ENCODE measurements at regions of chr17 and their contacts with region 1.

Region 1: GRCh38 chr17:75749545-75750389 is 15.2 kb downstream of the GALK1 start:
- DNase-seq: no peak
- ATAC-seq: peak; percentile 82
- H3K4me3 ChIP-seq: no peak overlapping the region
- H3K27ac ChIP-seq: no peak overlapping the region
- H3K4me1 ChIP-seq: peaks cover 10% of the 10 kb centered on the region
- H3K27me3 ChIP-seq: no peaks in the 10 kb centered on the region
- CTCF ChIP-seq: peak; percentile 85 to 94 (median 88)
- EP300 ChIP-seq: no peak
- POLR2A ChIP-seq: no peak
- RAD21 ChIP-seq: peak; percentile 77

Region 2: DNA sequence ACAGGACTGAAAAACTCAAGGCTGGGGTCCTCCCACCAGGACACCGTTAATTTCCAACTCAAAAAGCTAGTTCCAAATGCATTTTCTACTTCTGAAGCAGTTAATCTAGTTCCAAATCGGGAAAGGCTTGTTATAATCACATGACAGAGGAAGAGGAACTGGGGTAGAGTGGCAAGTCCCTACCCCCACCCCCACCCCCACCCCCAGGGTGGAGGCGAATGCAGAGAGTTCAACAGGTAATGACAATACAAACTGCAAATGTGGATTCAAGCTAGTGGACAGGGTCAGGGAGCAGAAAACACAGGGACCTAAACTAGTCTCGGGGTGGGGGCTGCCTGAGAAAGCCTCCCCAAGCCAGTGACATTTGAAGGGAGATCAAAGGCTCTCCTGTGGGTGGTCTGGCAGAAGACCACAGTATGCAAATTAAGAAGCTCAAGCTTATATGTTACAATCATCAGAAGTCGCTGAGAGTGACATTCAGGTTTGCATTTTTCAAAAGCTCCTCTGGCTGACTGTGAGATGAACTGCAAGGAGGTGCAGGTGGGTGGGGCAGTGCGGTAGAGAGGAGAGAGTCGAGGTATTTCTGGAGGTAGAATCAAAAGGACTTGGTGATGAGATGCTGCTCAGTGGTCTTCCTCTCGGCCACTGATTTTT is 404.1 kb before region 1 on chr17:
- CTCF ChIA-PET with region 1: no interaction called
- POLR2A ChIA-PET with region 1: no interaction called
- RAD21 ChIA-PET with region 1: no interaction called
- SMC1A ChIA-PET with region 1: no interaction called
- in situ Hi-C with region 1: no loop called
- intact Hi-C with region 1: no loop called
- DNase-seq: peak; percentile 91
- ATAC-seq: peak; percentile 79
- H3K4me3 ChIP-seq: peak overlapping the region; percentile 62
- H3K27ac ChIP-seq: peak overlapping the region; percentile 85
- H3K4me1 ChIP-seq: peaks cover 68% of the 10 kb centered on the region
- H3K27me3 ChIP-seq: no peaks in the 10 kb centered on the region
- CTCF ChIP-seq: no peak
- EP300 ChIP-seq: peak; percentile 34 to 65; a peak in 1 of 4 replicates
- POLR2A ChIP-seq: no peak
- RAD21 ChIP-seq: 0 out of 2 replicates have a peak, but pooled peaks have one; percentile 25

Region 3: DNA sequence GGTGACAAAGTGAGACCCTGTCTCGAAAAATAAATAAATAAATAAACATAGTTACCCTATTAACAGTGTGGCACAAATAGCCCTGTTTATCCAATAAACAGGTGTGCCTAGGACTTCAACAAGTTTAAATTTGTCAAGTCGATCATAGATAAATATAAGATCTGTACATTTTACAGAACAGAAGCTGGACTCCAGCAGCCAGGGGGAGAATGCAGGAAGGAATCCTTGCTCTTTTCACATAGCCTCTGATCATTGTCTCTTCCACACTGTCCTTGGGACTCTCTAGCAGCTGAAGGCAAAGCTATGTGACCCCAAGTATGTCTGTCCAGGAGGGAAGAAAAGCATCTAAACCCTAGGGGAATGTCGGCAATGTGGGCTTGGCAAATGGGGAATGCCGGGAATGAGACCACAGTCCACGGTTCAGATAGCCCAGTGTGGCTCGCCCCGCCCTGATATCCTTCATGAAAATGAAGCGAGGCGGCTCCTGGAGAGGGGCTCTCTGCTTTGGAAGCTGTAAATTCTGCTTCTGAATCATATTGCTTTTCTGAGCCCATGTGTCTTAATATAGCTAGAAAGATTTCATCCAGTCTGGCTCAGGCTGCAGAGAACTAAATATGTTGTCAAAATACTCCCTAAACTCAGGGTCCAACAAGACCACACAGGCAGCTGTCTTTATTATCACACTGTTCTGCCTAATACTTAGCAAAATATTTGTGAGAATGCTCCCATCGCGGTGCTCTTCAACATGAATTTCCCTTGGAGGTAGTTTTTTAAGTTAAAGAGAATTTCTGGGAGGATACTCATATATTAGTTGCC is 319.4 kb before region 1 on chr17:
- CTCF ChIA-PET with region 1: interaction called, 8 read pairs
- POLR2A ChIA-PET with region 1: interaction called, 3 read pairs
- RAD21 ChIA-PET with region 1: interaction called, 15 read pairs
- SMC1A ChIA-PET with region 1: no interaction called
- in situ Hi-C with region 1: loop called (anchors 5 kb)
- intact Hi-C with region 1: loop called (anchors 5 kb)
- DNase-seq: no peak
- ATAC-seq: no peak
- H3K4me3 ChIP-seq: no peak overlapping the region
- H3K27ac ChIP-seq: no peak overlapping the region
- H3K4me1 ChIP-seq: peaks cover 9% of the 10 kb centered on the region
- H3K27me3 ChIP-seq: no peaks in the 10 kb centered on the region; a peak in 1 of 4 replicates
- CTCF ChIP-seq: no peak
- EP300 ChIP-seq: no peak
- POLR2A ChIP-seq: no peak
- RAD21 ChIP-seq: no peak

Region 4: DNA sequence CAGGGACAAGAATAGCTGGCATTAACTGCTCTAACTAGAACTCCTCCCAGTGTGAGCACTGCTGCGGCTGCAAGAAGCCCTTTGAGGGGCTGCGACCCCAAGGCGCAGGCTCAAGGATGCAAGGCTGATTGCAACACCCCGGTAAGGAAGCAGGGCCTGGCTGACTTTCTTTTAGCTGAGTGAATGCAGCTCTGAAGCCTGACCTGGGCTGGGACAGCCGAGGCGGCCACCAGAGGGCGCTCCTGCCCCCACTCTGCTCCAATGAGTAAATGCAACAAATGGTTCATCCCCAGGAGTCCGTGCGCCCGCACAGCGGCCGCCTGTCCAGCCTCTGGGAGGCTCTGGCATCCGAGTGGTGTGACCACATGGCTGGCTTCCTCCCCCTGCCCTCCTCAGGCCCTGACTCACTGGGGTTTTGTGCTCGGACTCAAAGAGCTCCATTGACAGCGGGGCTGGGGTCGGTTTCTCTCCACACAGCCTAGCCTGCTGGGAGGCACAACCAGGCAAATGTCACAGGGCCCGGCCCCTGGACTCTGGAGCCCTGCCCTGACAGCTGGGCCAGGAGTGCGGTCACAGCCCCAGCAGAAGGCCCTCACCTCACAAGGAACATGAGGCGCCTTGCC is 116.8 kb before region 1 on chr17 and contains the start of gene SMIM5:
- CTCF ChIA-PET with region 1: interaction called, 336 read pairs
- POLR2A ChIA-PET with region 1: interaction called, 3 read pairs
- RAD21 ChIA-PET with region 1: interaction called, 148 read pairs
- SMC1A ChIA-PET with region 1: interaction called, 44 read pairs
- in situ Hi-C with region 1: loop called (anchors 10 kb)
- intact Hi-C with region 1: loop called (anchors 1 kb)
- DNase-seq: no peak
- ATAC-seq: peak; percentile 97
- H3K4me3 ChIP-seq: no peak within 1 kb of the TSS
- H3K27ac ChIP-seq: no peak within 1 kb of the TSS
- H3K4me1 ChIP-seq: peaks cover 8% of the 10 kb centered on the region
- H3K27me3 ChIP-seq: no peaks in the 10 kb centered on the region
- CTCF ChIP-seq: peak; percentile 87 to 95 (median 92)
- EP300 ChIP-seq: no peak
- POLR2A ChIP-seq: no peak
- RAD21 ChIP-seq: peak; percentile 69
- polyA plus RNA-seq, gene SMIM5: not detected

Region 5: DNA sequence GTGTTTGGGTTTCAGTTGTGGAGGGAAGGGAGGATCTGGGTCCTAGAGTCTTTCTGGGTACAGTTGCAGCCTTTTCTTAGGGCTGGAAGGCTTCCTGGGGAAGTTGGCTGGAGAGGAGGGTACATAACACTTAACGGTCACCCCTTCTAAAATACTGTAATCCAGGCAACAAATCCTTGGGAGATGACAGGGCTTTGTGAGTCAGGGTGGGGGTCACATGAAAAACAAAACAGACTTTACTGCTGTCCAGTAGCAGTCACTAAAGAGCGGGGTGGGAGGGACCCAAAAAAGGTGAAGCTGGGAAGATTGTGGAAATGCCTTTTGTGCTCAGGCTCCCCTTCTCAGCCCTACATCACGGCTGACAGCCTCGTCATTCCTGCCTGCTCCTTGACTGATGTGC is 76.3 kb before region 1 on chr17:
- CTCF ChIA-PET with region 1: interaction called, 197 read pairs
- POLR2A ChIA-PET with region 1: interaction called, 3 read pairs
- RAD21 ChIA-PET with region 1: interaction called, 79 read pairs
- SMC1A ChIA-PET with region 1: interaction called, 72 read pairs
- in situ Hi-C with region 1: loop called (anchors 5 kb)
- intact Hi-C with region 1: loop called (anchors 1 kb)
- DNase-seq: no peak
- ATAC-seq: no peak
- H3K4me3 ChIP-seq: no peak overlapping the region
- H3K27ac ChIP-seq: no peak overlapping the region
- H3K4me1 ChIP-seq: peaks cover 2% of the 10 kb centered on the region
- H3K27me3 ChIP-seq: no peaks in the 10 kb centered on the region
- CTCF ChIP-seq: no peak
- EP300 ChIP-seq: no peak
- POLR2A ChIP-seq: no peak
- RAD21 ChIP-seq: no peak

Region 6: GRCh38 chr17:75731716-75732498 is 17.9 kb before region 1 on chr17:
- CTCF ChIA-PET with region 1: interaction called, 48 read pairs
- POLR2A ChIA-PET with region 1: no interaction called
- RAD21 ChIA-PET with region 1: interaction called, 3 read pairs
- SMC1A ChIA-PET with region 1: interaction called, 3 read pairs
- in situ Hi-C with region 1: no loop called
- intact Hi-C with region 1: no loop called
- DNase-seq: no peak
- ATAC-seq: no peak
- H3K4me3 ChIP-seq: no peak overlapping the region
- H3K27ac ChIP-seq: no peak overlapping the region
- H3K4me1 ChIP-seq: 0 out of 2 replicates have a peak, but pooled peaks cover 3% of the 10 kb centered on the region
- H3K27me3 ChIP-seq: no peaks in the 10 kb centered on the region
- CTCF ChIP-seq: no peak
- EP300 ChIP-seq: no peak
- POLR2A ChIP-seq: no peak
- RAD21 ChIP-seq: no peak

Region 7: GRCh38 chr17:75784473-75785015 is 34.8 kb after region 1 on chr17 and contains the start of gene UNK:
- CTCF ChIA-PET with region 1: interaction called, 13 read pairs
- POLR2A ChIA-PET with region 1: interaction called, 12 read pairs
- RAD21 ChIA-PET with region 1: interaction called, 10 read pairs
- SMC1A ChIA-PET with region 1: interaction called, 6 read pairs
- in situ Hi-C with region 1: no loop called
- intact Hi-C with region 1: no loop called
- DNase-seq: peak; percentile 96
- ATAC-seq: peak; percentile 80
- H3K4me3 ChIP-seq: peak within 1 kb of the TSS; percentile 79
- H3K27ac ChIP-seq: peak within 1 kb of the TSS; percentile 97
- H3K4me1 ChIP-seq: peaks cover 22% of the 10 kb centered on the region
- H3K27me3 ChIP-seq: no peaks in the 10 kb centered on the region
- CTCF ChIP-seq: no peak
- EP300 ChIP-seq: no peak
- POLR2A ChIP-seq: no peak
- RAD21 ChIP-seq: no peak
- polyA plus RNA-seq, gene UNK: 8.9 to 11.9 TPM

Region 8: DNA sequence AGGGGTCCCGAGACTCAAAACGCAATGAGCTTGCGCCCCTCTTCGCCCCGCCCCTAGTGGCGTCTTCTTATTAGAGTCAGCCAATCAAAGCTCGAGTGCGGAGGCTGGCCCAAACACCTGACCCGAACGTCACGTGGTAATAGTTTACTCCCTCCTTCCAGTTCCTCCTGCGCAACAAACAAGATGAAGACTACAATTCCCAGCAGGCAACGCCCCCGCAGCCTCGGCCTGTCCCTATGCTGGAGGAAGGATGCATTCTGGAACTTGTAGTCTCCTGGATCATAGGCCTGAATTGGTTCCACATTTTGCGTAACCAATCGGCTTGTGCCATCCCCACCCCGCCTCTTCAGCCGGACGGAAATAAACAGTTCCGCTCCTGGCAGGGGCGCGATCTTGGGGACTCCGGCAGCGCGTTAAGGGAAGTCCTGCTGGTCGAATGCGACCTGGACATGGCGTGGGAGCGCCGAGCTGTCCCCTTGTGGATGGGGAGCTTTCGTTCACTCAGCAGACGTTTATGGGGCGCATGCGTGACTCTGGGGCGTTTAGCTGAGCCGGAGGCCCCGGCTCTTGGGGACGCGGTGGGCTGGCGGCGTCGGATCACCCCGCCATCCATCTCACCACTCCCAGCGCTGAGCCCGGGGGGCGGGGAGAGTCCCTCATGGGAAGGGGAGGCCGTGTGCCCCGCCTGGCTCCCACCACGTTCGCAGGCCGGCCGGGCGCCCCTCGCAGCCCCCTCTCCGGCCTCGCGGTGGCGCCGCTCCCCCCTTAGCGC is 105.7 kb after region 1 on chr17 and contains the start of gene WBP2:
- CTCF ChIA-PET with region 1: interaction called, 15 read pairs
- POLR2A ChIA-PET with region 1: interaction called, 4 read pairs
- RAD21 ChIA-PET with region 1: interaction called, 5 read pairs
- SMC1A ChIA-PET with region 1: interaction called, 3 read pairs
- in situ Hi-C with region 1: no loop called
- intact Hi-C with region 1: no loop called
- DNase-seq: peak; percentile 100
- ATAC-seq: peak; percentile 92
- H3K4me3 ChIP-seq: peak within 1 kb of the TSS; percentile 79
- H3K27ac ChIP-seq: peak within 1 kb of the TSS; percentile 93
- H3K4me1 ChIP-seq: peaks cover 23% of the 10 kb centered on the region
- H3K27me3 ChIP-seq: no peaks in the 10 kb centered on the region
- CTCF ChIP-seq: peak; percentile 49 to 53 (median 52); a peak in 4 of 6 replicates
- EP300 ChIP-seq: no peak
- POLR2A ChIP-seq: peak; percentile 98
- RAD21 ChIP-seq: peak; percentile 64
- polyA plus RNA-seq, gene WBP2: 1.5 to 3.0 TPM

Region 9: GRCh38 chr17:76053246-76054116 is 303.7 kb after region 1 on chr17:
- CTCF ChIA-PET with region 1: no interaction called
- POLR2A ChIA-PET with region 1: no interaction called
- RAD21 ChIA-PET with region 1: no interaction called
- SMC1A ChIA-PET with region 1: no interaction called
- in situ Hi-C with region 1: no loop called
- intact Hi-C with region 1: no loop called
- DNase-seq: no peak
- ATAC-seq: no peak
- H3K4me3 ChIP-seq: no peak overlapping the region
- H3K27ac ChIP-seq: no peak overlapping the region
- H3K4me1 ChIP-seq: peaks cover 4% of the 10 kb centered on the region
- H3K27me3 ChIP-seq: no peaks in the 10 kb centered on the region
- CTCF ChIP-seq: no peak
- EP300 ChIP-seq: no peak
- POLR2A ChIP-seq: no peak
- RAD21 ChIP-seq: no peak

Measured in GM12878 (cell line).